ENCODE measurements at regions of chr10 and their contacts with region 1.

Region 1: DNA sequence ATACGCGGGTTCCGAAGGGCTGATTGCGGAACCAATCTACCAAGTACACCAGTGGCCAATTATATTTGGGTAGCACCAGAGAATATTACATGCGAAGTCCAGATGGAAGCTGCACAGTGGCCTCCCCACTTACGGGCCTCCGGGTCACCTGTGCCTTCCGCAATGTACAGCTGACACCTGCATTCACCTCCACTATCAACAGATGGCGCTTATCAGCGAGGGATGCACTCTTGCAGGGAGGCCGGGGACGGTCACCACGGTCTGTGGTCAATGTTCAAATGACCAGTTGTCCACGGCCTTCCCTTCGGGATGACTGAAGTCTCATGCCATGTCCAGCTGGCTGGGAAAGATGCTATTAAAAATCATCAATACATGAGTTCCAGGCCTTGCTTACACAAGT is 47.6 kb downstream of the SLIT1 start:
- DNase-seq: peak; percentile 60
- ATAC-seq: peak; percentile 74
- H3K4me3 Mint-ChIP-seq: no peak overlapping the region
- H3K27ac Mint-ChIP-seq: no peak overlapping the region
- H3K4me1 Mint-ChIP-seq: peaks cover 22% of the 10 kb centered on the region
- H3K27me3 Mint-ChIP-seq: no peaks in the 10 kb centered on the region; the same call in 1 of the 2 replicates
- CTCF ChIP-seq: no peak; the same call in 1 of the 2 replicates

Region 2: GRCh38 chr10:96890172-96890513 is 248.0 kb before region 1 on chr10:
- CTCF ChIA-PET with region 1: no interaction called
- POLR2A ChIA-PET with region 1: no interaction called
- DNase-seq: no peak
- ATAC-seq: no peak
- H3K4me3 Mint-ChIP-seq: no peak overlapping the region
- H3K27ac Mint-ChIP-seq: 0 out of 2 replicates have a peak overlapping the region, but pooled peaks have one; percentile 4
- H3K4me1 Mint-ChIP-seq: peaks cover 18% of the 10 kb centered on the region
- H3K27me3 Mint-ChIP-seq: no peaks in the 10 kb centered on the region
- CTCF ChIP-seq: no peak

Region 3: GRCh38 chr10:97117372-97117771 is 20.8 kb before region 1 on chr10:
- CTCF ChIA-PET with region 1: no interaction called
- POLR2A ChIA-PET with region 1: no interaction called
- DNase-seq: no peak
- ATAC-seq: 0 out of 2 replicates have a peak, but pooled peaks have one; percentile 27
- H3K4me3 Mint-ChIP-seq: no peak overlapping the region
- H3K27ac Mint-ChIP-seq: no peak overlapping the region
- H3K4me1 Mint-ChIP-seq: peaks cover 8% of the 10 kb centered on the region
- H3K27me3 Mint-ChIP-seq: no peaks in the 10 kb centered on the region; the same call in 1 of the 2 replicates
- CTCF ChIP-seq: no peak

Region 4: DNA sequence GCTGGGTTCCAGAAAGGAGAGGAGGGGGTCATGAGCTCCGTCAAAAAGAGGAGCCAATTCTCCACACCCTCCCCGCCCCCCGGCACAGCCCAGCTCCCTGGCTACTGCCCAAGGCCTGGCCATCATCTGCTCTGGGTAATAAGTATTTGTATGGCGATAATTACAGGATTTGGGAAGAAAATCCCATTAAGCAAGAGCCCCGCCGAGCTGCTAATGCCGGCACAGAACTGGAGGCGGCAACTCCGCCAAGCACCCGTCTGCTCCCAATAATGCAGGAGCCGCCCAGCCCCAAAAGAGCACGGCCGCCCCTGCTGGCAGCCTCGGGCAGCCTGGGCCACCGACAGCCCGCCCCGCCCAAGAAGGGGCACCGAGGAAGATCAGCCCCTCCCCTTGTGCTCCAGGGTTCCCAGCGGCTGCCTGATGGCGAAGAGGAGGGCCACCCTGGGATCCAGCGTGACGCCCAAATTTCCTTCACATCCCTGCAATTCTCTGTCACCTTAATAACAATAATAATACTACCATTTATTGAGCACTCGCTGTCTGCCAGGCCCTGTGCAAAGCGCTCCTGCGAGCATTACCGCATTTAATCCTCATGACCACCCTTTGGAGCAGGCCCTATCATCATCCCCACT is 41.7 kb after region 1 on chr10:
- CTCF ChIA-PET with region 1: interaction called, 34 read pairs
- POLR2A ChIA-PET with region 1: no interaction called
- DNase-seq: peak; percentile 82
- ATAC-seq: peak; percentile 97
- H3K4me3 Mint-ChIP-seq: peak overlapping the region; percentile 57
- H3K27ac Mint-ChIP-seq: no peak overlapping the region
- H3K4me1 Mint-ChIP-seq: peaks cover 15% of the 10 kb centered on the region
- H3K27me3 Mint-ChIP-seq: peaks cover 36% of the 10 kb centered on the region
- CTCF ChIP-seq: no peak

Measured in WTC11 (cell line).